B cell (primary cell): ENCODE measurements at regions of chr10 and their contacts with region 1.

Region 1: DNA sequence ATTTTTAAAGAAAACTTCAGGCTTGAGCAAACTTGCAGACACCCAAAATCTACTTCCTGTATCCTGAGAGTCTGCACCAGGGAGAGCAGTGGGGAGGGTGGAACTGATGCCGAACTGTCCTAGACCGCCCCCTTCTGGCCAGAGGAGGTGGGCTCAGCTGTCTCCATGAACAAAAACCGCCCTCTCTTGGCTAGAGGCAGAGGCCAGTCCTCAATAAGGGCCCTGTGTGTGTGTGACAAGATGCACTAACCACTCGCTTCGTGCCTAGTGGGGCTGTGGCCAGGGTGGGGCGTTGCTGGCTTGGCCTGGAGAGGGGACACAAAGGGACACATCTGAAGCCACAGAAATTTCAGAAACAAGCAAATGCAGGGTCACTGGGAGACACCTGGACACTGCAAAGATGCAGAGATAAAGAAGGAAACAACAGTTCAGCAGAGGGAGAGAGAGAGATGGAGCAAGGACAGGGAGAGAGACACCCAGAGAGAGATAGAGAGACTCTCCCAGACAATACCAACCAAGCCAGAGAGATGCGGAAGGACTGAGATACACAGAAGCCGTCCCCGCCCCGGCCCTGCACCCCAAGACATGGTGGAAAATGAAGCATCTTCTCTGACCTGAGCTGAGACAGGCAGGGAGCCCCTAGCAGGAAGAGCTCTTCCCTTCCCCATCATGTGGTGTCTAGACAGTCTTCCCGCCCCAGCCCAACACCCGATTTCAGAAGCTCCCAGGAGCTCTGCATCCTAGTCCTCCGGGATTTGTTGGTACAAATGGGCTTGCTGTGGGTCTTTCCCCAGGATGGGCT is 22.7 kb upstream of the FXYD4 start:
- DNase-seq: peak; percentile 86
- ATAC-seq: peak; percentile 100
- H3K4me3 ChIP-seq: no peak overlapping the region
- H3K4me3 Mint-ChIP-seq: no peak overlapping the region
- H3K27ac ChIP-seq: no peak overlapping the region
- H3K27ac Mint-ChIP-seq: no peak overlapping the region
- H3K4me1 ChIP-seq: peaks cover 8 to 15% of the 10 kb centered on the region in 2 donors
- H3K4me1 Mint-ChIP-seq: peaks cover 6% of the 10 kb centered on the region
- H3K27me3 ChIP-seq: peaks cover 0 to 14% (median 4%) of the 10 kb centered on the region in 4 experiments
- H3K27me3 Mint-ChIP-seq: peaks cover 14% of the 10 kb centered on the region
- CTCF ChIP-seq: peak; percentile 87

Region 2: DNA sequence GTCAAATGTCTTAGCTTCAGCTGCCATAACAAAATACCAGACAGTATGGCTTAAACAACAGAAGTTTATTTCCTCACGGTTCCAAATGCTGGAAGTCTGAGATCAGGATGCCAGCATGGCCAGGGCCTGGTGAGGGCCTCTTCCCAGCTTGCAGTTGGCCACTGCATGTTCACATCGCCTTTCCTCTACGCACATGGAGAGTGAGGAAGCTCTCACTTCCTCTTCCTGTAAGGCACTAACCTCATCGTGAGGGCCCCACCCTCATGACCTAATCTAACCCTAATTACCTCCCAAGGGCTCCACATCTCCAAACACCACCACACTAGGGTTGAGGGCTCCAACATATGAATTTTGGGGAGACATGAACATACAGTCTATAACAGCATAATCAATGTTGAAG is 724.8 kb before region 1 on chr10:
- CTCF ChIA-PET with region 1: no interaction called
- POLR2A ChIA-PET with region 1: no interaction called
- intact Hi-C with region 1: no loop called
- DNase-seq: no peak
- ATAC-seq: no peak
- H3K4me3 ChIP-seq: no peak overlapping the region
- H3K4me3 Mint-ChIP-seq: no peak overlapping the region
- H3K27ac ChIP-seq: no peak overlapping the region
- H3K27ac Mint-ChIP-seq: no peak overlapping the region
- H3K4me1 ChIP-seq: no peaks in the 10 kb centered on the region
- H3K4me1 Mint-ChIP-seq: peaks cover 6% of the 10 kb centered on the region
- H3K27me3 ChIP-seq: no peaks in the 10 kb centered on the region
- H3K27me3 Mint-ChIP-seq: no peaks in the 10 kb centered on the region
- CTCF ChIP-seq: no peak

Region 3: DNA sequence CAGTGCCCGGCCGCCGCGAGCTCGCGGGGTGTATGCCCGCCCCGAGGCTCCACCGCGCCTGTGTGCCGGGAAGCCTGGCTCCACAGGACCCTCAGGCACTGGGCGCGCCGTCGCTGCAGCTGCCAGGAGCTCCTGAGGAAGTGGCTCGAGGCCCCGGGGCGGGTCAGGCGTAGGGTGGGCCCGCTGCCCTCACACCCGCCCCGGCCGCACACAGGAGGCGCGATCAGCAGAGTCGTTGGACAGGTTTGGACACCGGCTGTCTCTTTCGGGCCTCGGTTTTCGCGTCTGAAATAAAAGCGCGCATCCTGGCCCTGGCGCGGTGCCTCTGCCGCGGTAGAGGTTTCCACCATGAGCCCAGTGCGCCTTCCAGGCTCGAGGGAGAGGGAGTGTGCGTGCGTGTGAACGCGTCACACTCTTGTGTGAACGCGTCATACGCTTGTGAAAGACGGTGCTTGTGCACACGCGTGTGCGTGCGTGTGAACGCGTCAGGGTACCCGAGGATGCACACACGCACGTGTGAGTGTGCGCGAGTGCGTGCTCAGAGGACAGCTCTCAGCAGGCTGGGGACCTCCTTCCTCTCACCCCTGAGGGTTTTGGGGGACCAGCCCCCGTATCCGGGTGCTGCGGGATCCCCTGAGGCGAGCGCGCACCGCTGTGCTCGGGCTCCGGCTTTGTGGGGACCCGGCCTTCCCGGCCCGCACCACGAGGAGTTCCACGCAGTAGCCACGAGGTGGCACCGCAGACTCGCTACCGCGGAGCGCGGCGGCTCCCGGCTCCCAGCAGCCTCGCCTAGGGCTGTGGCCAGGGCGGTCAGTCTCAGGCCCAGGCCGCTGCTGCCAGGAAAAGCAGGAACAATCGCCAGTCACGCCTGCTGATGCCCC is 482.4 kb before region 1 on chr10:
- CTCF ChIA-PET with region 1: no interaction called
- POLR2A ChIA-PET with region 1: no interaction called
- intact Hi-C with region 1: loop called (anchors 5 kb)
- DNase-seq: peak; percentile 54
- ATAC-seq: peak; percentile 33
- H3K4me3 ChIP-seq: no peak overlapping the region
- H3K4me3 Mint-ChIP-seq: no peak overlapping the region
- H3K27ac ChIP-seq: no peak overlapping the region
- H3K27ac Mint-ChIP-seq: no peak overlapping the region
- H3K4me1 ChIP-seq: peaks cover 0 to 9% of the 10 kb centered on the region in 2 donors
- H3K4me1 Mint-ChIP-seq: peaks cover 9% of the 10 kb centered on the region
- H3K27me3 ChIP-seq: peaks cover 0 to 16% (median 4%) of the 10 kb centered on the region in 4 experiments
- H3K27me3 Mint-ChIP-seq: peaks cover 38% of the 10 kb centered on the region
- CTCF ChIP-seq: peak; percentile 44

Region 4: DNA sequence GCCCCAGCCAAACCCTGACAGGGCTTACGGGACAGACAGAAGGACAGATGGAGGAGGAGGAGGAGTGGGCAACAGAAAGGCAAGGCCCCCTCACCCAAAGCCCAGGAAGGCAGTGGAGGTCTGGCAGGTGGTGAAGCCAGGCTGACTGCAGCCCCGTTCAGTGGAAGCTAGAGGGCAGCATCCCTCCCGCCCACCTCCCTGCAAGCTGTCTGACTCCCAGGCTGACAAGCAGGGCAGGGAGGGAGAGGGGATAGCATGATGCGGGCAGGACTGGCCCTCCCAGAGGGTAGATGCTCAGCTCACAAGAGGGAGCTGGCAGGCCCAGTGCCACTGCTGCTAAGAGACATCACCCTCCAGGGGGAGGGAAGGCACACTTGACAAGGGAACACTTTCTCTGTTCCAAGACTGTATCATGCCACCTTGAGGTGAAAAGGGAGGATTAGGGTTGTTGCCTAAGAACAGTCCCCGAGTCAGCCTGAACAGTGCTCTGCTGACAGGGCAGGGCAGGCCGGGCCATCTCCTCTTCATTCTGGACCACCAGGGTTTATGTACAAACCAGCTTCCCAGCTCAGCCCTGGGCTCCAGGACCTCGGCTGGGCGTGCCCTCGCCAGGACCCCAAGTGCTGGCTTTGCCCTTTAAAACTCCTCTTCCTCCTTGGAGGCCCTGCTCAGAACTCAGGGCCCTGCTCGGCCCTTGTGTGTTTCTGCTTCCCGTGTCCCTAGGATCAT is 143.6 kb before region 1 on chr10:
- CTCF ChIA-PET with region 1: no interaction called
- POLR2A ChIA-PET with region 1: no interaction called
- intact Hi-C with region 1: loop called (anchors 5 kb)
- DNase-seq: peak; percentile 69
- ATAC-seq: peak; percentile 26
- H3K4me3 ChIP-seq: no peak overlapping the region
- H3K4me3 Mint-ChIP-seq: no peak overlapping the region
- H3K27ac ChIP-seq: no peak overlapping the region
- H3K27ac Mint-ChIP-seq: peak overlapping the region; percentile 37
- H3K4me1 ChIP-seq: peaks cover 7 to 16% of the 10 kb centered on the region in 2 donors
- H3K4me1 Mint-ChIP-seq: peaks cover 9% of the 10 kb centered on the region
- H3K27me3 ChIP-seq: no peaks in the 10 kb centered on the region
- H3K27me3 Mint-ChIP-seq: no peaks in the 10 kb centered on the region
- CTCF ChIP-seq: peak; percentile 79

Region 5: GRCh38 chr10:43265799-43266721 is 82.7 kb before region 1 on chr10:
- CTCF ChIA-PET with region 1: no interaction called
- POLR2A ChIA-PET with region 1: no interaction called
- intact Hi-C with region 1: no loop called
- DNase-seq: no peak
- ATAC-seq: no peak
- H3K4me3 ChIP-seq: no peak overlapping the region
- H3K4me3 Mint-ChIP-seq: peak overlapping the region; percentile 65
- H3K27ac ChIP-seq: no peak overlapping the region
- H3K27ac Mint-ChIP-seq: no peak overlapping the region
- H3K4me1 ChIP-seq: peaks cover 6 to 8% of the 10 kb centered on the region in 2 donors
- H3K4me1 Mint-ChIP-seq: peaks cover 8% of the 10 kb centered on the region
- H3K27me3 ChIP-seq: peaks cover 0 to 35% (median 13%) of the 10 kb centered on the region in 4 experiments
- H3K27me3 Mint-ChIP-seq: peaks cover 48% of the 10 kb centered on the region
- CTCF ChIP-seq: no peak

Region 6: GRCh38 chr10:43292755-43293676 is 55.7 kb before region 1 on chr10:
- CTCF ChIA-PET with region 1: interaction called, 33 read pairs
- POLR2A ChIA-PET with region 1: no interaction called
- intact Hi-C with region 1: loop called (anchors 1 kb)
- DNase-seq: peak; percentile 67
- ATAC-seq: peak; percentile 66
- H3K4me3 ChIP-seq: no peak overlapping the region
- H3K4me3 Mint-ChIP-seq: no peak overlapping the region
- H3K27ac ChIP-seq: no peak overlapping the region
- H3K27ac Mint-ChIP-seq: no peak overlapping the region
- H3K4me1 ChIP-seq: peaks cover 8 to 17% of the 10 kb centered on the region in 2 donors
- H3K4me1 Mint-ChIP-seq: peaks cover 8% of the 10 kb centered on the region
- H3K27me3 ChIP-seq: peaks cover 0 to 15% (median 7%) of the 10 kb centered on the region in 4 experiments
- H3K27me3 Mint-ChIP-seq: peaks cover 26% of the 10 kb centered on the region
- CTCF ChIP-seq: peak; percentile 73

Region 7: GRCh38 chr10:43322769-43323168 is 25.9 kb before region 1 on chr10:
- CTCF ChIA-PET with region 1: no interaction called
- POLR2A ChIA-PET with region 1: no interaction called
- intact Hi-C with region 1: no loop called
- DNase-seq: peak; percentile 71
- ATAC-seq: peak; percentile 95
- H3K4me3 ChIP-seq: no peak overlapping the region
- H3K4me3 Mint-ChIP-seq: peak overlapping the region; percentile 68
- H3K27ac ChIP-seq: no peak overlapping the region
- H3K27ac Mint-ChIP-seq: no peak overlapping the region
- H3K4me1 ChIP-seq: peaks cover 7 to 11% of the 10 kb centered on the region in 2 donors
- H3K4me1 Mint-ChIP-seq: peaks cover 14% of the 10 kb centered on the region
- H3K27me3 ChIP-seq: peaks cover 0 to 9% (median 0%) of the 10 kb centered on the region in 4 experiments
- H3K27me3 Mint-ChIP-seq: peaks cover 36% of the 10 kb centered on the region
- CTCF ChIP-seq: no peak

Region 8: DNA sequence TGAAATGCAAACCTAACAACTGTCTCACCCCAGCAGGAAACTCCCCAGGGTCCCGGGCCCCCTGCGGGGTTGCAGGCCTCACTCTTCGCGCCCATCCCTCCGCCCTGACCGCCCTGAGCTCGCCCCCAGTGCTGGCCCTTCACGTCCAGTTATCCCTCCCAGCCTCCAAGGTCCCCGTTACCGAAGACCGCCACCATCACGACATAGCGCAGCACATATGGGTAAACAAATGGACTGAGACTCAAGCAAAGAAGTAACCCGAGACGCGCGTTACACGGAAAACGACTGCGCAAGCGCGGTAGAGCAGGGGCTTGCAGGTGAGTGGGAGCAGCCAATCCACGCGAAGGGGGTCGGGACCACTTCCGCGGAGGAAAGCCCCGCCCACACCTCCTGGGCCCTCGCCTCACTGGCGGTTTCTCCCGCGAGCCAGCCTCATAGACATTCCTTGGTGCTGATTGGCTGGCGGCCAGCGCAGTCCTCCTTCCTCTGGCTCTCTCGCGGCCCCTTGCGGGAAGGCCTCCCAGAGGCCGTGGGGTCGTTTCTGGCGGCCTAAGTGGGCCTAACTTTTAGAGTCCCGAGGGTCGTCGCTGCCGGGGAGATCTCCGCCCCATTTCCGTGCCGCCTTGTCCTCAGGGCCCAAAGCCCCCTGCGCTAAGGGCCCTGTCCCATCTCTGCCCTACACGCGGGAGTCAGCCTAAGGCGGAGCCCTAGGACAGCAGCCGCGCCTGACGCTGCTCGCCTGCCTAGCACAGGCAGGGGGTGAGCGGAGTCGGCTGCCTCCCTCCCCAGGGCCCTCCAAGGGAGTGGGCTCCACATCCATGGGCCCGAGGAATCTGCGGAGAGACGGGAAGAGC is 13.5 kb after region 1 on chr10:
- CTCF ChIA-PET with region 1: interaction called, 7 read pairs
- POLR2A ChIA-PET with region 1: no interaction called
- intact Hi-C with region 1: loop called (anchors 1 kb)
- DNase-seq: peak; percentile 95
- ATAC-seq: peak; percentile 97
- H3K4me3 ChIP-seq: peak overlapping the region; percentile 66 to 91 (median 74)
- H3K4me3 Mint-ChIP-seq: peak overlapping the region; percentile 97
- H3K27ac ChIP-seq: peak overlapping the region; percentile 78 to 86
- H3K27ac Mint-ChIP-seq: peak overlapping the region; percentile 94
- H3K4me1 ChIP-seq: peaks cover 8 to 19% of the 10 kb centered on the region in 2 donors
- H3K4me1 Mint-ChIP-seq: peaks cover 25% of the 10 kb centered on the region
- H3K27me3 ChIP-seq: no peaks in the 10 kb centered on the region
- H3K27me3 Mint-ChIP-seq: no peaks in the 10 kb centered on the region
- CTCF ChIP-seq: peak; percentile 36

Region 9: GRCh38 chr10:43396928-43397624 is 48.4 kb after region 1 on chr10:
- CTCF ChIA-PET with region 1: interaction called, 3 read pairs
- POLR2A ChIA-PET with region 1: no interaction called
- intact Hi-C with region 1: loop called (anchors 1 kb)
- DNase-seq: peak; percentile 90
- ATAC-seq: peak; percentile 81
- H3K4me3 ChIP-seq: peak overlapping the region; percentile 46 to 75 (median 61)
- H3K4me3 Mint-ChIP-seq: peak overlapping the region; percentile 95
- H3K27ac ChIP-seq: peak overlapping the region; percentile 85 to 97
- H3K27ac Mint-ChIP-seq: peak overlapping the region; percentile 96
- H3K4me1 ChIP-seq: peaks cover 68 to 79% of the 10 kb centered on the region in 2 donors
- H3K4me1 Mint-ChIP-seq: peaks cover 73% of the 10 kb centered on the region
- H3K27me3 ChIP-seq: no peaks in the 10 kb centered on the region
- H3K27me3 Mint-ChIP-seq: no peaks in the 10 kb centered on the region
- CTCF ChIP-seq: no peak

Region 10: GRCh38 chr10:43461950-43462349 is 113.2 kb after region 1 on chr10:
- CTCF ChIA-PET with region 1: interaction called, 5 read pairs
- POLR2A ChIA-PET with region 1: no interaction called
- intact Hi-C with region 1: loop called (anchors 1 kb)
- DNase-seq: peak; percentile 84
- ATAC-seq: peak; percentile 60
- H3K4me3 ChIP-seq: no peak overlapping the region
- H3K4me3 Mint-ChIP-seq: no peak overlapping the region
- H3K27ac ChIP-seq: no peak overlapping the region
- H3K27ac Mint-ChIP-seq: no peak overlapping the region
- H3K4me1 ChIP-seq: peaks cover under 1 to 3% of the 10 kb centered on the region in 2 donors
- H3K4me1 Mint-ChIP-seq: peaks cover 6% of the 10 kb centered on the region
- H3K27me3 ChIP-seq: no peaks in the 10 kb centered on the region
- H3K27me3 Mint-ChIP-seq: no peaks in the 10 kb centered on the region
- CTCF ChIP-seq: peak; percentile 82